ENCODE measurements at regions of chr1 and their contacts with region 1.

Region 1: GRCh38 chr1:161139765-161140164 is 7.3 kb upstream of the DEDD start:
- DNase-seq: peak; percentile 56
- CTCF ChIP-seq: peak; percentile 37

Region 2: GRCh38 chr1:161153679-161154426 is 14.1 kb after region 1 on chr1 and contains the start of gene UFC1:
- CTCF ChIA-PET with region 1: interaction called, 25 read pairs
- POLR2A ChIA-PET with region 1: interaction called, 4 read pairs
- DNase-seq: peak; percentile 87
- CTCF ChIP-seq: no peak

Region 3: GRCh38 chr1:161177112-161177935 is 37.6 kb after region 1 on chr1 and contains the start of gene B4GALT3:
- CTCF ChIA-PET with region 1: no interaction called
- POLR2A ChIA-PET with region 1: no interaction called
- DNase-seq: peak; percentile 97
- CTCF ChIP-seq: peak; percentile 7

Region 4: GRCh38 chr1:161305867-161306519 is 166.2 kb after region 1 on chr1:
- CTCF ChIA-PET with region 1: no interaction called
- POLR2A ChIA-PET with region 1: no interaction called
- DNase-seq: peak; percentile 89
- CTCF ChIP-seq: peak; percentile 46